PC-9 (cell line): ENCODE measurements at regions of chr20 and their contacts with region 1.

Region 1: DNA sequence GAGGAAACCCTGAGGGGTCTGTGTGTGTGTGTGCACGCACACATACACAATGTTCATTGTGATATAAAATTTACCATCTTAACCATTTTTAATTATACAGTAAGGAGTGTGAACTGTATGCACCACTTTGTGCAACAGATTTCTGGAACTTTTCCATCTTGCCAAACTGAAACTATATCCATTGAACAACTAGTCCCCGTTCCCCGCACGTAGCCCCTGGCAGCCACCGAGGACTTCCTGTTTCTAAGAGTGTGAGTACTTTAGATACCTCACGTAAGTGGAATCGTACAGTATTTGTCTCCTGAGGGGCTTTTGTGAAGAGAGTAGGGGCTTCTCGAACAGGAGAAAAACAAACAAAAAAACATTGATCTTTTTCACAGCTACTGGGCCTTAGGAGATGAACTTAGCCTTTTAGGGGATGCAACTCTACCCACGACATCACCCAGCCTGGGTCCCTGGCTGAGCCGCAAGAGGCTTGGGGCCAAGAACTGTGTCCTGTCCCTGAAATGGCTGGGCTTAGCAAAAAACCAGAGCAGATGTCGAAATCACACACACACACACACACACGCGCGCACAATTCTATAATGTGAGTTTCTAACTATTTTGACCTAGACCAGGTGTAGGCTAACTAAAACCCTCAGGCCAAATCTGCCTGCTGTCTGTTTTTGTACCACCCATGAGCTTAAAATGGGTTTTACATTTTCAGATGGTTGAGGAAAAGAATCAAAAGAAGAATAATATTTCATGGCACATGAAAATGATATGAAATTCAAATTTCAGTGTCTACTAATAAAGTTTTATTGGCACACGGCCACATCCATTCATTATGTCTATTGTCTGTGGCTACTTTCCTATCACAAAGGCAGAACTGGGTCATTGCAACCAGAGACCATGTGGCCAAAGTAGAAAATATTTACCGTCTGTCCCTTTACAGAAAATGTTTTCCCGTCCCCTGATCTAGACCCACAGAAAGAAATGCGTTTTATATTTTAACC is 144.2 kb downstream of the EYA2 start:
- DNase-seq: no peak
- H3K4me3 ChIP-seq: no peak overlapping the region
- H3K27ac ChIP-seq: no peak overlapping the region
- H3K4me1 ChIP-seq: no peaks in the 10 kb centered on the region
- H3K27me3 ChIP-seq: peaks cover 8% of the 10 kb centered on the region; the same call in 1 of the 2 replicates
- CTCF ChIP-seq: no peak

Region 2: DNA sequence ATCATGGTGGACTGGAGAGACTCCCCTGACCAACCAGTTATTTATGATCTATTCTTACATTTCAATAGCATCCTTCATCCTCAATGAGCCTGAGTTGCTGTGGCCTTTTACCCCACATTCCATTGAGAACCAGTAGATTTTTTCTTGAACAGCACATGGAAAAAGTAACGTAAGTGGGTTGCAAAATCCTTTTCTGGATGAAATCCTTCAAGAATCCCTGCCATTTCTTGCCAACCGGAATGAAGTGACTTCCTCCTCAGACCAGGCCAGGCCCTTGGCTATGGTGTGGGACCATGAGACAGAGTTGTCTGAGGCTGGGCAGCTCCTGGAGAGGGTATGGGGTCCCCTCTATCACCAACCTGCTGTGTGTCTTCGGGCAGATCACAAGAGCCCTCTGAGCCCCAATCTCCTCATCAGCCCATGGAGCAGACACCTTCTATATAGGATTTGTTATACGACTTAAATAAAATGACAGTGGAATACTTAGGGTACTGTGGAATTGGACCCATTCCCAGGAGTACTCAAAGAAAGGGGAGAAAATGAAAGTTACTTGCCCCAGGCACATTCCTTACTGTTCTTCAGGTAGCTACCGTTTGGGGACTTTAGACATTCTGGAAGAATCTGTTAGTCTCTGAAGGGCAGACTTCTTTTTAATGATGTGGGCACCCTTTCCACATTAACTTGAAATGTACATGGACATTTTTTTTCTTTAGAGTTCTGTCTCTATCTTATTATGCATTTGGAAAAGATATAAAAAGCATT is 133.3 kb before region 1 on chr20:
- CTCF ChIA-PET with region 1: no interaction called
- POLR2A ChIA-PET with region 1: no interaction called
- intact Hi-C with region 1: no loop called
- DNase-seq: peak in 1 of 2 experiments; percentile 26
- H3K4me3 ChIP-seq: no peak overlapping the region
- H3K27ac ChIP-seq: no peak overlapping the region
- H3K4me1 ChIP-seq: no peaks in the 10 kb centered on the region
- H3K27me3 ChIP-seq: peaks cover 52% of the 10 kb centered on the region
- CTCF ChIP-seq: no peak

Region 3: DNA sequence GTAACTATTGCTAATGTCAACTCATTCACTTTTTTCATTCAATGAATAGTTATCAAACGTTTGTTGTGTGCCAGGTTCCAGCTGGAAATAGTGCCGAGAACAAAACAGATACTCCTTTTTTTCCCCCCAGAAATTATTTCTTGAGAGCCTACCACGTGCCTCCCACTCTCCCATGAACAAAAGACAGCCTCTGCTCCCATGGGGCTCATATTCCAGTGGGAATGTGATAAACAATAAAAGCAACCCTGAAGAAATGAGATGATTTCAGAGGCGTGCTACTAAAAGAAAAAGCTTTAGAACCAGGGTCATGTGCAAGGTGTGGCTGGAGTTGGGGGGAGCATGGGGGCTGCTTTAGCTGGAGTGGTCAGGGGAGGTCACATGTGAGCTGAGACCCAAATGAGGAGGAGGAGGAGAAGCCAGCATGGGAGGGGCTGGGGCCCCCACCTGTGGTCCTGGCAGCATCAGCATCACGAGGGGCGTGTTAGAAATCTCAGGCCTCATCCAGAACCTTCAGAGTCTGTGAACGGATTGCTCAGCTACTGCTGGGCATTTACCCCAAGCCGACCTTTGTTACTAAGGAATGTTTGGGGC is 13.2 kb after region 1 on chr20:
- CTCF ChIA-PET with region 1: no interaction called
- POLR2A ChIA-PET with region 1: no interaction called
- intact Hi-C with region 1: no loop called
- DNase-seq: no peak
- H3K4me3 ChIP-seq: no peak overlapping the region
- H3K27ac ChIP-seq: no peak overlapping the region
- H3K4me1 ChIP-seq: no peaks in the 10 kb centered on the region
- H3K27me3 ChIP-seq: peaks cover 67% of the 10 kb centered on the region
- CTCF ChIP-seq: no peak

Region 4: DNA sequence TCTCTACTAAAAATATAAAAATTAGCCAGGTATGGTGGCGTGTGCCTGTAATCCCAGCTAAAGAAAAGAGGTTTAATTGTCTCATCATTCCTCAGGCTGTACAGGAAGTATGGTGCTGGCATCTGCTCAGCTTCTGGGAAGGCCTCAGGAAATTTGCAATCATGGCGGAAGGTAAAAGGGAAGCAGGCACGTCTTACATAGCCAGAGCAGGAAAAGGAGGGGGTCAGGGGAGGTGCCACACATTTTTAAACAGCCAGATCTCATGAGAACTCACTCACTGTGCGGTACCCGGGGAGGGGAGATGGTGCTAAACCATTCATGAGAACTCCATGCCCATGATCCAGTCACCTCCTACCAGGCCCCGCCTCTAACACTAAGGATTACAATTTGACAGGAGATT is 47.5 kb after region 1 on chr20:
- CTCF ChIA-PET with region 1: no interaction called
- POLR2A ChIA-PET with region 1: interaction called, 14 read pairs
- intact Hi-C with region 1: no loop called
- DNase-seq: no peak
- H3K4me3 ChIP-seq: no peak overlapping the region
- H3K27ac ChIP-seq: no peak overlapping the region
- H3K4me1 ChIP-seq: no peaks in the 10 kb centered on the region
- H3K27me3 ChIP-seq: no peaks in the 10 kb centered on the region
- CTCF ChIP-seq: no peak

Region 5: GRCh38 chr20:47181056-47181862 is 142.4 kb after region 1 on chr20:
- CTCF ChIA-PET with region 1: no interaction called
- POLR2A ChIA-PET with region 1: no interaction called
- intact Hi-C with region 1: no loop called
- DNase-seq: peak; percentile 36 to 79
- H3K4me3 ChIP-seq: no peak overlapping the region
- H3K27ac ChIP-seq: no peak overlapping the region
- H3K4me1 ChIP-seq: no peaks in the 10 kb centered on the region
- H3K27me3 ChIP-seq: no peaks in the 10 kb centered on the region
- CTCF ChIP-seq: no peak